ENCODE measurements at regions of chr6 and their contacts with region 1.

Region 1: DNA sequence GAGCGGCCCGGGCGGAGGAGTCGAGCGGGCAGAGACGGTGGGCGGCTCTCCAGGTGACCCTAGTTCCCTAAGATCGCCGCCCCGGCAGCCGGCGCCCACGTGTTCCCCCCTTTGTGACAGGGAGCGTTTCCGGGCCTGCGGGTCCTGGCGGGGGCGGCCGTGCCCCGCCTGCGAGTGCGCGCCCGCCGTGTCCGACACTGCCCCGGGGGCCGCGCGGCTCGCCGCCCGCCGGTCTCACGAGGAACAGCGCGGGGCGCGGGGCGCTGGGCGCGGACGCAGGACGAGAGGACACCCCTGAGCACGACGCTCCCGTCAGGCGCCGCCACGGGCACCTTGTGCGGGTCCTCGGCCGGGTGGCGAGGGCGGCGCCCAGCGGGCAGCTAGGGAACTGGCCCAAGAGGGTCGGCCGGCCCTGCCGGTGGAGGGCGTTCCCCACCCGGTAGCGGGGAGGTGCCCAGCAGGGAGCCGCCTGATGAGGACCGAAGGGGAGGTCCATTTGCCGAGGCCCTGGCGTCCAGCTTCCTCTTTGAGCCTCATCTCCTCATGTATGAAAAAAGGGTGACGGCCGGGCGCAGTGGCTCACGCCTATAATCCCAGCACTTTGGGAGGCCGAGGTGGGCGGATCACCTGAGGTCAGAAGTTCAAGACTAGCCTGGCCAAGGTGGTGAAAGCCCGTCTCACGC is at the start of gene VARS1:
- DNase-seq: peak; percentile 77 to 98 (median 87)

Region 2: GRCh38 chr6:31541658-31542521 is 253.9 kb before region 1 on chr6 and contains the start of gene DDX39B:
- intact Hi-C with region 1: loop called (anchors 10 kb)
- DNase-seq: peak; percentile 93 to 99 (median 96)

Region 3: GRCh38 chr6:31702819-31703522 is 92.8 kb before region 1 on chr6 and contains the start of gene ABHD16A:
- intact Hi-C with region 1: loop called (anchors 10 kb)
- DNase-seq: peak; percentile 96 to 100 (median 98)

Region 4: DNA sequence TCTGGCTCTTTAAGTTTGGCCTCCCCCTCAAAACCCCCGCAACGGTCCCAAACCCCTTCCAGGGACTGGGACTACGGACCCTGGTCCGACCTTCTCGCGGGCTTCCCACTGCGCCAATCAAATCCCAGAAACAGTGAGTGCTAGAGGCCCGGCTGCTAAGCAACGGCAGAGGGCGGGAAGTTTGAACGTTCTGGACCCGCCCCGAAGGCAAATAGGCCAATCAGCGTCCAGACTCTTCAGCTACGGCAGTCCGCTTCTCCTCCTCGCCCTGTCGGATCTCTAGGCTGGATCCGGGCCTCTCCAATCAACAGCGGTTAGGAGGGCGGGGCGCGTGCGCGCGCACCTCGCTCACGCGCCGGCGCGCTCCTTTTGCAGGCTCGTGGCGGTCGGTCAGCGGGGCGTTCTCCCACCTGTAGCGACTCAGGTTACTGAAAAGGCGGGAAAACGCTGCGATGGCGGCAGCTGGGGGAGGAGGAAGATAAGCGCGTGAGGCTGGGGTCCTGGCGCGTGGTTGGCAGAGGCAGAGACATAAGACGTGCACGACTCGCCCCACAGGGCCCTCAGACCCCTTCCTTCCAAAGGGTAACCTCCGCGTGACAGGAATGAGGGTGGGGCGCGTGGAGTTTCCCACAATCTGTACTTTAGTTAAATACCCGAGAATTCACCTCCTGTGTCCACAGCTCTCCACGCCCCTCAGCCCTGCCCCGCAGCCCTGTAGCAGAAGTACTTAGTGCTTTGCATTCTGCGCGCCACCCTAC is 55.9 kb before region 1 on chr6 and contains the start of gene MSH5:
- intact Hi-C with region 1: loop called (anchors 10 kb)
- DNase-seq: peak; percentile 95 to 100 (median 98)

Region 5: GRCh38 chr6:31834434-31835198 is 38.9 kb after region 1 on chr6:
- intact Hi-C with region 1: loop called (anchors 5 kb)
- DNase-seq: peak; percentile 78 to 97 (median 84)

Region 6: GRCh38 chr6:33147807-33148666 is 1352.3 kb after region 1 on chr6:
- intact Hi-C with region 1: no loop called
- DNase-seq: no peak

Measured in posterior cingulate gyrus (tissue), 11 donors.